Astrocyte of the cerebellum (primary cell): ENCODE measurements at regions of chr20 and their contacts with region 1.

Region 1: GRCh38 chr20:1854246-1854645 is 41.0 kb upstream of the SIRPA start:
- DNase-seq: no peak
- H3K4me3 ChIP-seq: no peak overlapping the region
- CTCF ChIP-seq: no peak

Region 2: GRCh38 chr20:1816384-1817381 is 37.6 kb before region 1 on chr20:
- in situ Hi-C with region 1: loop called (anchors 5 kb)
- DNase-seq: no peak
- H3K4me3 ChIP-seq: no peak overlapping the region
- CTCF ChIP-seq: no peak

Region 3: GRCh38 chr20:2261105-2261504 is 406.9 kb after region 1 on chr20:
- in situ Hi-C with region 1: no loop called
- DNase-seq: no peak
- H3K4me3 ChIP-seq: no peak overlapping the region
- CTCF ChIP-seq: no peak